Gastrocnemius medialis (tissue), 4 donors: ENCODE measurements at regions of chr7 and their contacts with region 1.

Region 1: GRCh38 chr7:107168233-107169119 is at the start of gene HBP1:
- DNase-seq: peak; percentile 100
- ATAC-seq: peak; percentile 84
- H3K4me3 ChIP-seq: peak within 1 kb of the TSS; percentile 85 to 94 (median 89)
- H3K27ac ChIP-seq: peak within 1 kb of the TSS; percentile 97 to 100 (median 98)
- H3K4me1 ChIP-seq: peaks cover 32 to 38% of the 10 kb centered on the region in 2 donors
- H3K27me3 ChIP-seq: no peaks in the 10 kb centered on the region
- CTCF ChIP-seq: no peak
- POLR2A ChIP-seq: peak; percentile 40 to 95
- total RNA-seq, gene HBP1: 70.6 to 172 (median 143) TPM

Region 2: DNA sequence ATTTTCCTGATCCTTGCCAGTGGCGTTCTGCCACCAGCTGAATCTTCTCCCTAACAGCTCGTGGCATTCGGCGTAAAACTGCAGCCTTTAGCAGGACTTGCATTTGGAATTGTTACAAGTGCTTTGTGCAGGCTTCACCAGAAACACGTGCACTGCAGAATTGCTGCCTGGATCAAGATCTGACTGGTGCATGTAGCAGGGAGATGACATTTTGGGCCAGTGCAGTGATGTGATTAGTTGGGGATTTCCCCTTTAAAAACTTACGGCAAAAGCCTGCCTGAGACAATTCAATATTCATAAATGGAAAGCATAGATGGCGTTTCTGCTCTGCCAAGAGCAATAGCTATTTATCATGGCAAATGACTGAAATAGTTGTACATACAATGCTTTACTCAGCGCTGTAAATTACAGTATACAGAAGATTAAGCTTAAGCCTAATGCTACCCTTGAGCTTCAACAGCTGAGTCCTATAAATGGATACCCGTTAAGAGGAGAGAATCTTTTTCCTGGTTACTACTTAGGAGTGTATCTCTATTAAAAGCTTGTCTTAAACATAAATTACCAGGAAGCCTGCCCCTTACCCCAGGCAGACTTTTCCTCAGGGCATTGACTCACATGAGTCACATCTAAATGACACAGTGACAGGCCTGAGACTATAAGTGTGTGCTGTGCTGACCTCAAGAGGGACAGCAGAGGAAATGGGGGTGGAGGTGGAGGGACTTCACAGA is 1398.4 kb before region 1 on chr7:
- in situ Hi-C with region 1: no loop called
- intact Hi-C with region 1: no loop called
- DNase-seq: no peak
- ATAC-seq: peak in 1 of 2 donors; percentile 41
- H3K4me3 ChIP-seq: no peak overlapping the region
- H3K27ac ChIP-seq: no peak overlapping the region
- H3K4me1 ChIP-seq: peaks cover 5 to 7% of the 10 kb centered on the region in 2 donors
- H3K27me3 ChIP-seq: no peaks in the 10 kb centered on the region
- CTCF ChIP-seq: no peak
- POLR2A ChIP-seq: no peak

Region 3: DNA sequence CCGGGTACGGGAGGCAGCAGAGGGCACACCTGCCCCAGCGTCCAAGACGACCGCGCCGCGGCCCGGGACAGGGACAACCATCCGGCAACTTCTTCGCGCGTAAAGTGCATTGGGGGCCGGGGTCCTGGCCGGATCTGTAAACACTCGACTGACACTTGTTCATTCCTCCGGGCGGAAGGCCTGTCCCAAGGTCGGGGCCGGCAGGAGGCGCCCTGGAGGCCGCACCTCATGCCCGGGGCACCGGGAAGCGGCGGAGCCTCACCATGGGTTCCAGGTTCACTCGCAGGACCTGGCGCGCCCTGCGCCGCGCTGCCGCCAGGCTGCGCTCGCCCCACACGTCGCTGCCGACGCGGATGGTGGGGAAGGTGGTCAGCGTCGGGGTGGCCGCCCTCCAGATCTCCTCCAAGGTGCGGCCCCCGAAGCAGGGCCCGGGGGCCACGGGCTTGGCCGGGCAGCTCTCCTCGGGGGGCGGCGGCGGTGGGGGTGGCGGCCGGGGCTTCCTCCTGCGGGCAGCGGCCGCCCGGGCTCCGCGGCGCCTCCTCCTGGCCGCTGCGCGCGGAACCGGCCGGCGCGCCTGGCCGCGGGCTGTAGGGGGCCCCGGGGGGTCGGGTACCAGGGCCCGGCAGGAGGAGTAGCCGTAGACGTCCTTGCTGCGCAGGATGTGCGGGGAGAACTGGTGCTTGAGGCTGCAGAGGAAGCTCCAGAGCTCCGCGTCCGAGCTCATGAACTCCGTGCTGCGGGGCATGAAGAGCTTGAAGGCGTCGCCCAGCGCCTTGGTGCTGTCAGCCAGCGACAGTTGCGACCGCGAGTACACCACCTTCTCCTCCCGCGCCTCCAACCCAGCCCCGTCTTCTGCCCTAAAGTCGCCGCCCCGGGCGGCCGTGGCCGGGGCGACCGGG is 508.3 kb before region 1 on chr7:
- in situ Hi-C with region 1: loop called in 1 of 4 experiments (anchors 25 kb)
- intact Hi-C with region 1: loop called (anchors 2 kb)
- DNase-seq: peak; percentile 23 to 59
- ATAC-seq: peak; percentile 57 to 66
- H3K4me3 ChIP-seq: peak overlapping the region; percentile 60 to 89 (median 78)
- H3K27ac ChIP-seq: peak overlapping the region; percentile 82 to 91 (median 88)
- H3K4me1 ChIP-seq: peaks cover 8 to 12% of the 10 kb centered on the region in 2 donors
- H3K27me3 ChIP-seq: no peaks in the 10 kb centered on the region
- CTCF ChIP-seq: peak; percentile 49 to 76 (median 67)
- POLR2A ChIP-seq: peak in 1 of 2 donors; percentile 9

Region 4: GRCh38 chr7:107150375-107151073 is 18.0 kb before region 1 on chr7:
- in situ Hi-C with region 1: no loop called
- intact Hi-C with region 1: loop called (anchors 1 kb)
- DNase-seq: peak; percentile 7 to 46
- ATAC-seq: peak; percentile 58 to 64
- H3K4me3 ChIP-seq: no peak overlapping the region
- H3K27ac ChIP-seq: no peak overlapping the region
- H3K4me1 ChIP-seq: peaks cover 3 to 6% of the 10 kb centered on the region in 2 donors
- H3K27me3 ChIP-seq: no peaks in the 10 kb centered on the region
- CTCF ChIP-seq: peak; percentile 34 to 66 (median 50)
- POLR2A ChIP-seq: no peak

Region 5: DNA sequence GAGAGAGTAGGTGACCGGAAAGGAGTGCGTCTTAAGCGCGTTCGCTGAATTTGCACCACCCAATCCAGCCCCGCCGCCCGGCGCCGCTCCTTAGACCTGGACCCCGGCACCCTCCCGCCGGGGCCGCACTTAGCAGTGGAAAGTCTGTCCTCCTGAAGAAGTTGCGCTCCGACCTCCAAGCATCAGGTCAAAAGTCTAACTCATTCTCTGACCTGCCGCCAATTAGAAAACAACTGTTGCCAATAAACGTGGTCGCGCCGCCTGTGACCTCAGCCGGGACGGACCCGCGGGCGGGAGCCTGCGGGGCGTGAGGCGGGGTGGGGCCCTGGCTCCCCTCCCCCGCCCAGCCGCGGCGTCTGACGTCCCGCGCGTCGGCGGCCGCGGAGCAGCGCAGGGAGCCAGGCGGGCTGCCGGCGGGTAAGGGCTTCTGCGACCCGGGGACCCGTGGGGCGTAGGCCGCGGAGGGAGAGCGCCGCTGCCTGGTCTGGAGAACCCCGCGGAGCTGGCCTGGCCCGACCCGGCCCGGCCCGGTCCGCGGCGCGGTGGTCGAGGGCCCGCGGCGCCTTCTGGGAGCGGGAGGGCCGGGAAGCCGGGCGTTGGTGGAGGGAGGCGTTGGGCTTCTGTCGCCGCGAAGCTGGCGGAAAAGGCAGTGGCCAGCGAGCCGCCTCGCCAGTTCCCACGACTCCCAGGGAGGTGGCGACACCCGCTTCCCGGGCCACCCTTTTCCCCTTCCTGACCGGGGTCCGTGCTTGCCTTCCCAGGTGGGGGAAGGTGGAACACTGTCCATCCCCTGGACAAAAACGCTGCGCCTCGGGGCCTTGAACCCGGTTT is 411.6 kb after region 1 on chr7 and contains the start of gene BCAP29:
- in situ Hi-C with region 1: no loop called
- intact Hi-C with region 1: loop called (anchors 1 kb)
- DNase-seq: peak; percentile 59 to 79
- ATAC-seq: peak; percentile 86 to 87
- H3K4me3 ChIP-seq: peak within 1 kb of the TSS; percentile 68 to 82 (median 82)
- H3K27ac ChIP-seq: peak within 1 kb of the TSS; percentile 89 to 95 (median 92)
- H3K4me1 ChIP-seq: peaks cover 10 to 12% of the 10 kb centered on the region in 2 donors
- H3K27me3 ChIP-seq: no peaks in the 10 kb centered on the region
- CTCF ChIP-seq: peak in 4 of 5 experiments; percentile 32 to 57 (median 39)
- POLR2A ChIP-seq: peak; percentile 94 to 95
- total RNA-seq, gene BCAP29: 125 to 152 (median 129) TPM

Region 6: GRCh38 chr7:108569381-108570145 is 1401.1 kb after region 1 on chr7 and contains the starts of genes DNAJB9 and THAP5:
- in situ Hi-C with region 1: no loop called
- intact Hi-C with region 1: loop called (anchors 2 kb)
- DNase-seq: peak; percentile 99
- ATAC-seq: peak; percentile 93 to 95
- H3K4me3 ChIP-seq: peak within 1 kb of the TSS; percentile 58 to 95 (median 84)
- H3K27ac ChIP-seq: peak within 1 kb of the TSS; percentile 86 to 99 (median 96)
- H3K4me1 ChIP-seq: peaks cover 38 to 58% of the 10 kb centered on the region in 2 donors
- H3K27me3 ChIP-seq: no peaks in the 10 kb centered on the region
- CTCF ChIP-seq: no peak
- POLR2A ChIP-seq: peak; percentile 98 to 99
- total RNA-seq, gene DNAJB9: 24.2 to 96.6 (median 67.8) TPM
- total RNA-seq, gene THAP5: 22.5 to 36.0 (median 25.6) TPM